WTC11 (cell line): ENCODE measurements at regions of chr22 and their contacts with region 1.

Region 1: GRCh38 chr22:23849009-23850006 is 8.4 kb upstream of the SLC2A11 start:
- DNase-seq: peak; percentile 97
- ATAC-seq: peak; percentile 84
- H3K4me3 Mint-ChIP-seq: no peak overlapping the region
- H3K27ac Mint-ChIP-seq: no peak overlapping the region
- H3K4me1 Mint-ChIP-seq: peaks cover 37% of the 10 kb centered on the region
- H3K27me3 Mint-ChIP-seq: peaks cover 7% of the 10 kb centered on the region
- CTCF ChIP-seq: peak; percentile 92

Region 2: GRCh38 chr22:23716811-23717801 is 132.2 kb before region 1 on chr22:
- CTCF ChIA-PET with region 1: interaction called, 12 read pairs
- POLR2A ChIA-PET with region 1: no interaction called
- DNase-seq: peak; percentile 90
- ATAC-seq: peak; percentile 90
- H3K4me3 Mint-ChIP-seq: peak overlapping the region; percentile 71
- H3K27ac Mint-ChIP-seq: peak overlapping the region; percentile 74; the same call in 1 of the 2 replicates
- H3K4me1 Mint-ChIP-seq: 0 out of 2 replicates have a peak, but pooled peaks cover 4% of the 10 kb centered on the region
- H3K27me3 Mint-ChIP-seq: no peaks in the 10 kb centered on the region
- CTCF ChIP-seq: no peak

Region 3: DNA sequence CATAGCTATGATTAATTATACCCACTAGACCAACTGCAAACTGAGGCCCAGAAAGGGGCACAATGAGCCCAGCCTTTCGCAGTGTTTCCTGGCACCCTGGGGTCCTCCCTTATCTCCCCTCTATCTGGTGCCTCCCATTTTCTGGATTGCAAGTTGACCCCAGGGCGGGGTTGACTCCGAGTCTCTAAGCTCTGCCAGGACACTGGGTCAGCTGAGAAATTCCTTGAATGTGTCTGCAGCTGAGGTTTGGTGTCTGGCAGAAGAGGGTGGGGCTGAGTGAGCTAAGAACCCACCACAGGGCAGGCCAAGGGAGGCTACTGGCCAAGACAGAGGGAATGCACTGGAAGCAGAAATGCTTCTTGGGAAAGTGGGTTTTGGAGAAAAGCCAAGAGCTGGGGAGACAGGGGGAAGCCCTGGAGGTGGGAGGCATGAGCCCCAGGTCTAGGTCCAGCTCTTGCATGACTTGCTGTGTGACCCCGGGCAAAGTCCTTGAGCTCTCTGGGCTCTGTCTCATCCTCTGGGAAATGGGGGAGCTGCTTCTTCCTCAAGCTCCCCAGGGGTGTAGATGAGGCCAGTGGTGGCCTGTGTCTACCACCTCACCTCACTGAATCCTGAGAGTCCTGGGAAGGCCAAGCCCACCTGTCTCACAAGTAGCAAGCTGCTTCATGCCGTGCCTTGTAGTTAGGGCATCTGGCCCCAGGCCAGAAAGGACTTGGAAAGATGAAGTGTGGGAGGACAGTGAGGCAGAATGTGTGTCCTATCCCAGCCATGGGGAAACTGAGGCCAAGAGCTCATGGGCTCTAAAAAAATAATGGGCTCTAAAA is 74.4 kb before region 1 on chr22:
- CTCF ChIA-PET with region 1: interaction called, 77 read pairs
- POLR2A ChIA-PET with region 1: interaction called, 8 read pairs
- DNase-seq: no peak
- ATAC-seq: no peak
- H3K4me3 Mint-ChIP-seq: peak overlapping the region; percentile 23; the same call in 1 of the 2 replicates
- H3K27ac Mint-ChIP-seq: no peak overlapping the region
- H3K4me1 Mint-ChIP-seq: peaks cover 26% of the 10 kb centered on the region
- H3K27me3 Mint-ChIP-seq: peaks cover 28% of the 10 kb centered on the region
- CTCF ChIP-seq: no peak

Region 4: DNA sequence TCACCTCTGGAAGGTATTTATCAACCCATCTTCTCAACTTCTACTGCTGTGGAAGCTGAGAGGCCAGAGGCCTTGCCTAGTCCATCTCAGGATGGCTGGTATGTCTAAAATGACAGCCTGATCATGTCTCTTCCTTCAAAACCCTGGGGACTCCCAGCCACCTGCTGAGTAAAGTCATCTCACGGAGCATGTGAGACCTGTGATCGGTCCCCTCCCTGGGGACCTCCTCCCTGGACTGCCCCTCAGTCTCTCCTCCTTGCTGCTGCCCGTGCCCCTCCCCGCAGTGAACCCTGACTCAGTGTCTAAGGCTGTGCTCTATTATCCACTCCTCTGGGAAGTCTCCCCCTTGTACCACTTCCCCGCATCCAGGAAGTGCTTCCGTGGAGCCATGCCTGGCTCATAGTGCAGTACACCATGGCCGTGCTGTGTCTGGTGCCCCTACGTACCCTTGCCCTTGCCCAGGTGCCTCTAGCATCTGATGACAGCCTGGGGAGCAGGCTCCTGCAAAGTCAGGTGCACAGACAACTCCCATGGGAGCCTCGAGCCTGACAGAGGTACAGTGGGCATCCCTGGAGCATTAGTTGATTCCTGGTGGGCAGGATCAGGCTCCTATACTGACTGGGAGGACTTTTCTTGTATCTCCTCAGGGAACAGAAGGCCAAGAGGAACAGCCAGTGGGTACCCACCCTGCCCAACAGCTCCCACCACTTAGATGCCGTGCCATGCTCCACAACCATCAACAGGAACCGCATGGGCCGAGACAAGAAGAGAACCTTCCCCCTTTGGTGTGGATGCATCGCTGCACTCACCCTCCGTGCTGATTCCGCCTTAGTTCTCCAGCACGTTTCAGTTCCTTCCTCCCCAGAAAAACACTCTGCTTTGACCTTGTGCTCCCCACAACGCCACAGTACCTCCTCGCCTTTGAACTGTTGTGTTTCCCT is 48.7 kb before region 1 on chr22:
- CTCF ChIA-PET with region 1: interaction called, 12 read pairs
- POLR2A ChIA-PET with region 1: no interaction called
- DNase-seq: no peak
- ATAC-seq: no peak
- H3K4me3 Mint-ChIP-seq: no peak overlapping the region
- H3K27ac Mint-ChIP-seq: 0 out of 2 replicates have a peak overlapping the region, but pooled peaks have one; percentile 26
- H3K4me1 Mint-ChIP-seq: peaks cover 6% of the 10 kb centered on the region; the same call in 1 of the 2 replicates
- H3K27me3 Mint-ChIP-seq: no peaks in the 10 kb centered on the region
- CTCF ChIP-seq: no peak

Region 5: DNA sequence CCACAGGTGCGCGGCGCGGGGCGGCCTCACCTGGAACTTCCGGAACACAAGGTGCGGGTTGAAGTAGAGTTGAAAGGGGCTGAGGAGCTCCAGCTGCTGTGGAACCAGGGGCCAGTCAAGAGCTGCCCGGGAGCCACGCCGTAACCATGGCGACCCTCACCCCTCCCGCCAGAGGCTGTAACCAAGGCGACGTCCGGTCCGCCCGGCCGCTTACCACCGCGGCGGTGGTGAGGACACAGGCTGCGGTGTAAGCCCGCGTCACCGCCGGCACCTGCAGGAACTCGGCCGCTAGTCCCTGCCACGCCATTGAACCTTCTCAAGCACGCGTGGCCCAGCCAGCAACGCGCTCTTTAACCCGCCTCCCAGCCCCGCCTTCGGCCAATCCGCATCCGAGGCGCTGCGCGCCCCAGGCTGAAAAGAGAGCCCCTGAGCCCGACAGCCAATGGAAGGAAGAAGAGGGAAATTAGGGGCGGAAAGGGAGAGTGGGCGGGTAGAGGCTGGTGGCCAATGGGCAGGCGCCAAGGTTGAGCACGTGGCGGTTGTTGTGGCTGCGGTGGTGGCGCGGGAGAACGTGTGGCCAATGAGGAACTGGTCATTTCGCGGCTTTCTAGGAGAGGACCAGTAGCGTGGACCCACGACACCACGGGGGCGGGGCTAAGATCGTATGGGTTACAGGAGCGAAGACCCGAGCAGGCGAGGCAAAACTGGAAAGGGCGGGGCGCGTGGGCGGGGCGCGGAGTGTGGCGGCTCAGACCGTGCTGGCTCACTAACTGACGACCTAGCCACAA is 10.4 kb before region 1 on chr22 and contains the start of gene DERL3:
- CTCF ChIA-PET with region 1: interaction called, 31 read pairs
- POLR2A ChIA-PET with region 1: interaction called, 3 read pairs
- DNase-seq: peak; percentile 99
- ATAC-seq: peak; percentile 89
- H3K4me3 Mint-ChIP-seq: peak within 1 kb of the TSS; percentile 88
- H3K27ac Mint-ChIP-seq: peak within 1 kb of the TSS; percentile 92
- H3K4me1 Mint-ChIP-seq: peaks cover 20% of the 10 kb centered on the region
- H3K27me3 Mint-ChIP-seq: peaks cover 23% of the 10 kb centered on the region
- CTCF ChIP-seq: no peak
- total RNA-seq, gene DERL3: 10.9 to 12.5 TPM (median 11.3 TPM) in 3 replicates

Region 6: DNA sequence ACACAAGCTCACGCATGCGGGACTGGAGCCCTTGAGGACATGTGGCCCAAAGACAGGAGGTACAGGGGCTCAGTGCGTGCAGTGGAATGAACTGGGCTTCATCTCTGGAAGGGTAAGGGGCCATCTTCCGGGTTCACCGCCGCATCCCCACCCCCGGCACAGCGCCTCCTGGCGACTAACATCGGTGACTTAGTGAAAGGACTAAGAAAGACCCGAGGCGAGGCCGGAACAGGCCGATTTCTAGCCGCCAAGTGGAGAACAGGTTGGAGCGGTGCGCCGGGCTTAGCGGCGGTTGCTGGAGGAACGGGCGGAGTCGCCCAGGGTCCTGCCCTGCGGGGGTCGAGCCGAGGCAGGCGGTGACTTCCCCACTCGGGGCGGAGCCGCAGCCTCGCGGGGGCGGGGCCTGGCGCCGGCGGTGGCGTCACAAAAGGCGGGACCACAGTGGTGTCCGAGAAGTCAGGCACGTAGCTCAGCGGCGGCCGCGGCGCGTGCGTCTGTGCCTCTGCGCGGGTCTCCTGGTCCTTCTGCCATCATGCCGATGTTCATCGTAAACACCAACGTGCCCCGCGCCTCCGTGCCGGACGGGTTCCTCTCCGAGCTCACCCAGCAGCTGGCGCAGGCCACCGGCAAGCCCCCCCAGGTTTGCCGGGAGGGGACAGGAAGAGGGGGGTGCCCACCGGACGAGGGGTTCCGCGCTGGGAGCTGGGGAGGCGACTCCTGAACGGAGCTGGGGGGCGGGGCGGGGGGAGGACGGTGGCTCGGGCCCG is 44.8 kb after region 1 on chr22 and contains the start of gene MIF:
- CTCF ChIA-PET with region 1: interaction called, 22 read pairs
- POLR2A ChIA-PET with region 1: no interaction called
- DNase-seq: peak; percentile 99
- ATAC-seq: peak; percentile 83
- H3K4me3 Mint-ChIP-seq: peak within 1 kb of the TSS; percentile 92
- H3K27ac Mint-ChIP-seq: peak within 1 kb of the TSS; percentile 99
- H3K4me1 Mint-ChIP-seq: peaks cover 50% of the 10 kb centered on the region
- H3K27me3 Mint-ChIP-seq: peaks cover 19% of the 10 kb centered on the region
- CTCF ChIP-seq: peak; percentile 83
- total RNA-seq, gene MIF: 1,424 to 1,978 TPM (median 1,885 TPM) in 3 replicates